IMR-90 (cell line): ENCODE measurements at regions of chr12 and their contacts with region 1.

Region 1: GRCh38 chr12:54368709-54369583 is 4.7 kb upstream of the GPR84 start:
- DNase-seq: peak; percentile 88
- ATAC-seq: peak; percentile 81
- H3K4me3 ChIP-seq: no peak overlapping the region
- H3K27ac ChIP-seq: peak overlapping the region; percentile 34; the same call in 1 of the 2 replicates
- H3K4me1 ChIP-seq: peaks cover 10% of the 10 kb centered on the region; the same call in 1 of the 2 replicates
- H3K27me3 ChIP-seq: no peaks in the 10 kb centered on the region
- CTCF ChIP-seq: peak; percentile 97
- POLR2A ChIP-seq: no peak
- RAD21 ChIP-seq: peak; percentile 90

Region 2: GRCh38 chr12:54220092-54220557 is 148.8 kb before region 1 on chr12:
- CTCF ChIA-PET with region 1: interaction called, 6 read pairs
- POLR2A ChIA-PET with region 1: no interaction called
- dilution Hi-C with region 1: no loop called
- in situ Hi-C with region 1: loop called (anchors 5 kb)
- intact Hi-C with region 1: loop called (anchors 1 kb)
- DNase-seq: peak; percentile 74
- ATAC-seq: peak; percentile 48
- H3K4me3 ChIP-seq: no peak overlapping the region
- H3K27ac ChIP-seq: no peak overlapping the region
- H3K4me1 ChIP-seq: peaks cover 20% of the 10 kb centered on the region
- H3K27me3 ChIP-seq: no peaks in the 10 kb centered on the region; the same call in 1 of the 2 replicates
- CTCF ChIP-seq: peak; percentile 81
- POLR2A ChIP-seq: no peak
- RAD21 ChIP-seq: peak; percentile 83

Region 3: DNA sequence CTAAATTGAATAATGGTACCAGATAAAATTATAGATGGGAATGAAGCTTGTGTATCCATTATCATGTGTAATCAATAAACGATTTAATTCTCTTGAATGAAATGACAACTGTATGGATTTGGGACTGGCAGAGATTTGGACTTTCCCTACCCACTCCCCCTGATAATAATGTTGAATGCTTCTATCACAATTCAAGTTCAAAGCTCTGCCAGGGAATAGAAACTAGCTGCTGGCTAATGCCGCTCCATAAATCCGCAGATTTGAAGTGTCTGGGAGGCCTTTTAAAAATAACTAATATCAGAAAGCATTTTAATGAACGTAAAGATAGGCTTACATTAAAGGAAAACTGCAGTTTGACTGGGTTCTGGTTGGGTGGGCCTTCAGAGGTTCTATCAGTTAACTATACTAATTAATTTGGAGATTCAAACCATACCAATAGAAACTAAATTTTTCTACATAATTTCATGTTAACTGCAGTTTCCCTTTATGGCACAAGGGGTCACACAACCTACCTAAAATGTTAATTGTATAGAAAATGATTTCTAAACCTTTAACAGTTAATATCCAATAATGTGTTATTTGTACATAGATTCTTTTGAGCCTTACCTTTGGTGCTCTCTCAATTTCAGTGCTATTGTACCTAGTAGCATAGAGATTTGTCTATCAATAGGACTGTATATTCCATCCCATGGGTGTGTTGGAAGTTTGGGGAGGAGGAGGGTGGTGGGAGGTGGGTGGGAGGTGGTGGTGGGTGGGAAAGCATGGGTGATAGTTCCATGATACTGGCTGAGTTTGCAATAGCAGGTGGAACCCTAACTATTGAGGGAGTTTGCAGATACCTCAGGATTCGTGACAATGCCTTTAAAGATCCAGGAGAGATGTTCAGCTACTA is 83.5 kb before region 1 on chr12:
- CTCF ChIA-PET with region 1: no interaction called
- POLR2A ChIA-PET with region 1: interaction called, 7 read pairs
- dilution Hi-C with region 1: no loop called
- in situ Hi-C with region 1: loop called (anchors 5 kb)
- intact Hi-C with region 1: loop called (anchors 1 kb)
- DNase-seq: no peak
- ATAC-seq: no peak
- H3K4me3 ChIP-seq: no peak overlapping the region
- H3K27ac ChIP-seq: no peak overlapping the region
- H3K4me1 ChIP-seq: no peaks in the 10 kb centered on the region
- H3K27me3 ChIP-seq: no peaks in the 10 kb centered on the region
- CTCF ChIP-seq: peak; percentile 41
- POLR2A ChIP-seq: no peak
- RAD21 ChIP-seq: peak; percentile 29

Region 4: GRCh38 chr12:54294152-54294952 is 74.6 kb before region 1 on chr12:
- CTCF ChIA-PET with region 1: interaction called, 7 read pairs
- POLR2A ChIA-PET with region 1: interaction called, 7 read pairs
- dilution Hi-C with region 1: no loop called
- in situ Hi-C with region 1: loop called (anchors 5 kb)
- intact Hi-C with region 1: loop called (anchors 1 kb)
- DNase-seq: no peak
- ATAC-seq: peak; percentile 80
- H3K4me3 ChIP-seq: no peak overlapping the region
- H3K27ac ChIP-seq: no peak overlapping the region
- H3K4me1 ChIP-seq: no peaks in the 10 kb centered on the region
- H3K27me3 ChIP-seq: peaks cover 4% of the 10 kb centered on the region
- CTCF ChIP-seq: peak; percentile 69
- POLR2A ChIP-seq: no peak
- RAD21 ChIP-seq: peak; percentile 72

Region 5: DNA sequence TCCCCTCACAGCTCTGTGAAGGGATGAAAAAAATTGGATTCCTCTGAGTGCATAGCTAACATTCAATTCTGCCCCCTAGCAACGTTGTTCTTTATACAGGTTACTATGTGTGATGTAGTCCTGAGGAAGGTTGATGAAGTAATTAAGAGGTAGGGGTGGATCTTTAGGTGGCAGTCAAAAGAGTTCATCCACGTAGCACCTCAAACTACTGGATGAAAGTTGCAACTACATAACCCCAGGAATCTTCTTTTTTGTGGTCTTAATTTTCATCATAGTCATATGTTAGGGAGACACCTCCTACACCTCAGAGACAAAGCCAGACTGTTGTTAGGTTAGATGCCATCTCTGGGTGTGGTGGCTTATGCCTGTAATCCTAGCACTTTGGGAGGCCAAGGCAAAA is 57.9 kb before region 1 on chr12:
- CTCF ChIA-PET with region 1: no interaction called
- POLR2A ChIA-PET with region 1: no interaction called
- dilution Hi-C with region 1: no loop called
- in situ Hi-C with region 1: no loop called
- intact Hi-C with region 1: no loop called
- DNase-seq: no peak
- ATAC-seq: no peak
- H3K4me3 ChIP-seq: no peak overlapping the region
- H3K27ac ChIP-seq: no peak overlapping the region
- H3K4me1 ChIP-seq: no peaks in the 10 kb centered on the region
- H3K27me3 ChIP-seq: peaks cover 6% of the 10 kb centered on the region
- CTCF ChIP-seq: no peak
- POLR2A ChIP-seq: no peak
- RAD21 ChIP-seq: no peak

Region 6: DNA sequence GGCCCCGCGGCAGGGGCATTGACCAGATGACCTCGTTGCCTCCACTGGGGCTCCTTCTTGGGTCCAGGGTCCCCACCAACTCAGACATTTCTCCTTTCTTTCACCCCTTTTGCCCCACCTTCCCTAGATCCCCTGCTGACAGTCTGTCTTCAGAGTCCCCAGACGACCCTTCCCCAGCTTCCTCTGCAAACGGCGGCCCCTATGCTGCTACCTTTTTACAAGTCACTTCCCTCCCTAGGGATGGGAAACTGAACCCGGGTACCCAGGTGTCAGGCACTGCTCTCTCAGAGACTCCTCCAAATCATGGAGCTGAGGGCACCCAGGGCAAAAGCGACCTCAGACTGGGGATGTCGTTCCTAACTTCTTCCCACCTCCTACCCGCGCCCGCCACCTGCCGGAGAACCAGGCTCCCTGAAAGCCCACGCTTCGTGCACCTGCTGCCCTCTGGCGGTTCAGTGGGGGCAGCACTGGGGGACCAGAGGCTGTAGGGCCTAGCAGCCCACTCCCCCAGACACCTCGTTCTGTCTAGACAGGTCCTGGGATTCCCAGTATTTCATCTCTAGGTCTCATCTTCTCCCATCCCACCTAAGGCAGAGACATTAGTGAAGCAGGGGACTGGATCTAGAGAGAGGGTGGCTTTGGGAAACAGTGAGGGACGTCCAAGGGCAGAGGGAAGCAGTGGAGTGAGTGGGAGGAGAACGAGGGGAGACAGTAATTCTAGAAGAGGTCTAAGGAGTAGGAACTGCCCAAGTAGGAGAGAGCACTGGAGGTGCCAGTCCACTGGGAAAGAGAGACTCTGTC is 10.7 kb after region 1 on chr12:
- CTCF ChIA-PET with region 1: interaction called, 15 read pairs
- POLR2A ChIA-PET with region 1: interaction called, 4 read pairs
- dilution Hi-C with region 1: no loop called
- in situ Hi-C with region 1: no loop called
- intact Hi-C with region 1: loop called (anchors 1 kb)
- DNase-seq: peak; percentile 73
- ATAC-seq: peak; percentile 76
- H3K4me3 ChIP-seq: peak overlapping the region; percentile 57
- H3K27ac ChIP-seq: no peak overlapping the region
- H3K4me1 ChIP-seq: peaks cover 9% of the 10 kb centered on the region
- H3K27me3 ChIP-seq: no peaks in the 10 kb centered on the region
- CTCF ChIP-seq: peak; percentile 100; the same call in 1 of the 2 replicates
- POLR2A ChIP-seq: no peak
- RAD21 ChIP-seq: peak; percentile 91

Region 7: GRCh38 chr12:54398995-54399793 is 30.2 kb after region 1 on chr12:
- CTCF ChIA-PET with region 1: interaction called, 3 read pairs
- POLR2A ChIA-PET with region 1: no interaction called
- dilution Hi-C with region 1: no loop called
- in situ Hi-C with region 1: no loop called
- intact Hi-C with region 1: loop called (anchors 1 kb)
- DNase-seq: peak; percentile 78
- ATAC-seq: peak; percentile 96
- H3K4me3 ChIP-seq: no peak overlapping the region
- H3K27ac ChIP-seq: no peak overlapping the region
- H3K4me1 ChIP-seq: no peaks in the 10 kb centered on the region
- H3K27me3 ChIP-seq: no peaks in the 10 kb centered on the region
- CTCF ChIP-seq: peak; percentile 98
- POLR2A ChIP-seq: no peak
- RAD21 ChIP-seq: peak; percentile 97

Region 8: GRCh38 chr12:54439521-54440255 is 70.7 kb after region 1 on chr12:
- CTCF ChIA-PET with region 1: interaction called, 7 read pairs
- POLR2A ChIA-PET with region 1: no interaction called
- dilution Hi-C with region 1: no loop called
- in situ Hi-C with region 1: no loop called
- intact Hi-C with region 1: loop called (anchors 1 kb)
- DNase-seq: peak; percentile 86
- ATAC-seq: peak; percentile 98
- H3K4me3 ChIP-seq: no peak overlapping the region
- H3K27ac ChIP-seq: no peak overlapping the region
- H3K4me1 ChIP-seq: peaks cover 4% of the 10 kb centered on the region
- H3K27me3 ChIP-seq: peaks cover 10% of the 10 kb centered on the region
- CTCF ChIP-seq: peak; percentile 95
- POLR2A ChIP-seq: no peak
- RAD21 ChIP-seq: peak; percentile 96

Region 9: DNA sequence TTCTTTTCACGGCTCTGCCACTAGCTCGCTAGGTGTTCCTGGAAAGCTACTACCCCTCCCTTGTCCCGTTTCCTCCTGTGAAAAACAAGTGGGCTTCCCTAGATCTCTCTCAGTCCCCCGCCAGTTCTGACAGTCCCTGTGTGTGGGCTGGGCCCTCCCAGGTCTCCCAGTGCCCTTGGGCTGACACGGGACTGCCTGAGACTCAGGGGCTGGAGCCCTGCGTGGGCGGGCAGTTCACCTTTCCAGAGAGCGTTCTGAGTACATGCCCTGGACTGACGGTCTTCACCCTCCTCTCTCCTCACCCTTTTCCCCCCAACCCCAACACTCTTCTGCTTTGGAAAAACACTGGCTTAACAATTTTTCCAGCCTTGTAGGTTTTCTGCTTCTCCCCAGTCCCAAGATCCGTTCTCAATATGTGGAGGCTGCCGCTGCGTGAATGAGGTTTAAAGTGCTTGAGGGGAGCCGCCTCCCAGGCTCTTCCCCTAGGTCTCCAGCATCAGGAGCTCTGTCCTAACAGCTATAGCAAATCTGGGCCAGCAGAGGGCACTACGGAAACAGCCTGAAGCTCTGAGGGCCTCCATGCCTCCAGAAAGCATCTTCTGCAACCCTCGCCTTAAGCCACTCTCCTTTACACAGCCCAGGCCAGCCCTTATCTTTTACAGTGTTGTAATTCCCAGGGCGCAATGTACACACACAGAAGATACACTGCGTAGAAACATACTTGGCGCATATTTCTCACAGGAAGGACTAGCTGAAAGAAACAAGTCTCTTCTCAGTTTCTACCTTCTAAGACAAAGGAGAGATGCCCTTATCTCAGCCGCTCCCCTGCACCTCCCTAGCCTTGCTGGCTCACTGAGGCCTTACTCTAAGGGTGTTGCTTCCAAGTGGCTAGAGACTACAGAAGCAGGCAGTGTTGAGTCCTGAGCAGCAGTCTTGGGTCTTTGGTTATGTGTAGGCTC is 289.6 kb after region 1 on chr12:
- CTCF ChIA-PET with region 1: no interaction called
- POLR2A ChIA-PET with region 1: no interaction called
- dilution Hi-C with region 1: no loop called
- in situ Hi-C with region 1: no loop called
- intact Hi-C with region 1: no loop called
- DNase-seq: peak; percentile 6
- ATAC-seq: peak; percentile 57; the same call in 1 of the 2 replicates
- H3K4me3 ChIP-seq: no peak overlapping the region
- H3K27ac ChIP-seq: no peak overlapping the region
- H3K4me1 ChIP-seq: no peaks in the 10 kb centered on the region
- H3K27me3 ChIP-seq: no peaks in the 10 kb centered on the region; the same call in 1 of the 2 replicates
- CTCF ChIP-seq: peak; percentile 41
- POLR2A ChIP-seq: no peak
- RAD21 ChIP-seq: no peak